ENCODE measurements at regions of chr19 and their contacts with region 1.

Region 1: DNA sequence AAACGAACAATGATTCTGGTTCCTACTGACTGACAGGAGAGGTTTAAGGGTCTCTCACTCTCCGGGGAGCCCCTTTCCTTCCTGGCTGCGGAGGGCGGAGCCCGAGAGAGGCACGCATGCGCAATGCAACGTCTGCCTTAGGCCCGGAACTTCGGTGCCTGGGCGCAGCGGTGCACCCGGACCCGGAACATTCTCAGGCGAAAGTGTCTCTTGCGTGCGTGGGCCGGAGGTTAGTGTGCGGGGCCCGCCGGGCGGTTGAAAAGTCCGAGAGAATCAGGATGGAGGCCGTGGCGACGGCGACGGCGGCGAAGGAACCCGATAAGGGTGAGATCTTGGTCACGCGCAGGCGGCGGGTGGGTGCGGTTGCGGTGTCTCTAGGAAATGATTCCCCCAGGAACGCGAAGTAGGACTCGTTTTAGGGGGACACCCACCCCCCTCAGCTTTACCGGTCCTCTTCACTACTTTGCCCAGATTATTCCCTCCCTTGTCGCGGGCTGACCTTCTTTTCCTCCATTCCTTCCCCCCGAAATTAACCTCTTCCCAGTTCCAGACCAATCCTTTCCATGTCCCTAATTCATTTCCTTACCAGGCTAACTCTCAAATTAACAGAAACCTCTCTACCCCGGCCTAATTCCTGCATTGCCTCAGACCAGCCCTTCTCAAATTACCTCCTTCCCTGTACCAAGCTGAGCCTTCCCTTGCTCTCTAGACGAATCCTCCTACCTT is at the start of gene CCDC97:
- DNase-seq: no peak
- H3K4me3 ChIP-seq: peak within 1 kb of the TSS; percentile 92
- CTCF ChIP-seq: no peak

Region 2: DNA sequence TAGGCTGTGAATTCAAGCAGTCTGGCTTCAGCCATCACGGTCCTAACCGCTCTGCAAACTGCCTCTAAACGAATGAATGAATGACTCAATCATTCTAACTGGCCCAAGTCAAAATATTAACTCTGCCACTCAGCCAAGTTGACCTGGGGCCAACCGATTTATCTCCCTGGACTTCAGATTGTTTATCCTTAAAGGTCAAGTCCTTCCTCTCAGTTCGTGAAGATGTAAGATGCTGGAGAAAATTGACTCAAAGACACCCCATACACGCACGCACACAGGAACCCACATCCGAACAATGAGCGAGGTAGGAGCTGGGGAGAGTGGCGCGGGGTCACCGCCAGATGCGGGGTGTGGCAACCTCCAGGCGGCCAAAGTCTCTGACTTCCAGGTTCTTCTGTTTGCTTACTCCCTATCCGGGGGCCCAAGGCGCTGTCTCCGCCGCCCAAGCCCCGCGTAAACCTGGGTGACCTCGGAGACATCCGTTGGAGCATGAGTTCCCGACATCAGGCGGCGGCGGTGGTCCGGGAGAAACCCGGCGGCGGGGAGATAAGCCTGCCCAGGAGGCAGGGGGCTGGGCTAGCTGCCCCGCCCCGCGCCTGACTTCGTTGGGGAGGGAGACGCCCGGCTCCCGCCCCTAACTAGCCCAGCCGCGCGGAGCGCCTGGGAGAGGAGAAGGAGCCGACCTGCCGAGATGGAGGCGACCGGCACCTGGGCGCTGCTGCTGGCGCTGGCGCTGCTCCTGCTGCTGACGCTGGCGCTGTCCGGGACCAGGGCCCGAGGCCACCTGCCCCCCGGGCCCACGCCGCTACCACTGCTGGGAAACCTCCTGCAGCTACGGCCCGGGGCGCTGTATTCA is 117.4 kb before region 1 on chr19 and contains the start of gene CYP2S1:
- CTCF ChIA-PET with region 1: interaction called, 10 read pairs
- POLR2A ChIA-PET with region 1: no interaction called
- DNase-seq: no peak
- H3K4me3 ChIP-seq: peak within 1 kb of the TSS; percentile 6; the same call in 1 of the 2 replicates
- CTCF ChIP-seq: no peak

Region 3: GRCh38 chr19:41226053-41226873 is 83.9 kb before region 1 on chr19:
- CTCF ChIA-PET with region 1: interaction called, 10 read pairs
- POLR2A ChIA-PET with region 1: no interaction called
- DNase-seq: no peak
- H3K4me3 ChIP-seq: peak overlapping the region; percentile 47
- CTCF ChIP-seq: no peak

Region 4: DNA sequence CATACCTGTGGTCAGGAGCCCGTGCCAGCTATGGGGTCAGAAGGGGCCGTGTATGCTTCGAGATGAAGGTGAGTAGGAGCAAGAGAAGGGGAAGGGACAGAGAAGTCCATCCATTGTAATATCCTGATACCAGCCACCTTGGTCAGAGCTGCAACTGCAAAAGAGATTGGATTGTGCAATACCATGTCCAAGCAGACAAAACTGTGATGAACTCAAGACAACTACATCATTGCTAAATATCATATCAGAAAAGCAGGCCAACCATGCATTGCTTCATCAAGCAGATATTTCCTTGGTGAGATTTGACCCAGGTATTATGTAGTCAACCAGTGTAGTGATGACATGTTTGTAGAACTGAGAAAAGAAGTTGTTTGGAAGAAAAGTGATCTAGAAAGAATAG is 34.0 kb before region 1 on chr19:
- CTCF ChIA-PET with region 1: interaction called, 20 read pairs
- POLR2A ChIA-PET with region 1: no interaction called
- DNase-seq: no peak
- H3K4me3 ChIP-seq: no peak overlapping the region
- CTCF ChIP-seq: no peak

Region 5: DNA sequence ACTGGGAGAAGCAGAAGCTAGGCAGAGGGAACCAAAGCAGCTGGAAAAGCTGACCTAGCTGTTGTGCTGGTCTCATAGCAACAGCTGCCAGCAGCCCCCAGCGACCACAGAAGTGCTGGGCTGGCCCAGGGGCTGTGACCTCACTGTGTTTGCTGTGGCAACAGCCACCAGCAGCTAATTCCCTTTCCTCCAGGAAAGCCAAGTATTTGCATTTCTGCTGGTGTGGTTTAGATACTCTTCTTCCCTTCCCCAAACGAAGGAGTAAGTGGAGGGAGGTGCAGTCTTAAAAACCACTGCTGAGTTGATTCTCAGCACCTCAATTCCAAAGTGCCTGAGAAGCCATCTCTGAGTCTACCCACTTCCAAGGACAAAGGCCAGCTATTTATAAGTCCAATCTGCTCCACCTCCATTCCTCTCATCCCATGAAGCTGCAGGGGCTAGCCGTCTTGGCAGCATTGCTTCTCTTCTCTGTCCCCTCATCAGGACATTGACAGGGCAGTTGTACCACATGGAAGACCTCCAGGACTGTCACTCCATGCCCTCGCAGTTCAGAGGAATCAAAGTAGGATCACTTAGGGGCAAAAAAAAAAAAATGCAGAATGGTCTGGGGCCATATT is 11.7 kb before region 1 on chr19:
- CTCF ChIA-PET with region 1: interaction called, 164 read pairs
- POLR2A ChIA-PET with region 1: interaction called, 4 read pairs
- DNase-seq: peak; percentile 37
- H3K4me3 ChIP-seq: no peak overlapping the region
- CTCF ChIP-seq: no peak

Region 6: DNA sequence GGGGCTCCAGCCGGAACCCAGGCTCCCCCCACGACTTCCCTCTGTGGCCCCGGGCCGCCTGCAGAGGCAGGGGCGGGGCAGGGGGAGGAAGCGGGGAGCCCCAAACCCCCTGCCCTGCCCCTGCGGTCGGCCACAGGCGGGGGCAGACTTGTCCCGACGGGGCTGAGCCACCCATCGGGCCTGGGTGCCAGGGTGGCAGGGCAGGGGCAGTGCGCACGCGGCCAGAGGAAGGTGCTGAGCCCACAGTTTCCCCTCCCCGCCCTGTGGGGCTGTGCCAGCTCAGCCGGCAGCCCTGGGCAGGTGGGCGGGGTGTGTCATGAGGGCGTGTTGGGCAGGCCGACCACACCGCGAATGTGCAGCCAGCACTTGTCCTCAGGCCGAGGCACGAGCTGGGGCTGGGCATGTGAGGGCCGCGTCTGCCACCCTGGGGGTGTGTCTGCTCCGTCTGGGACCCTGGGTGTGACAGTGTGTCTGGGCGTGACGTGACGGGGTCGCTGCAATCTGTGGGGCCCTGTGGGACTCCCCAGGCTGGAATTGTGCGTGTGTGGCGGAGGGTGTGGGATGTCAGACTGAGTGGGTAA is 17.5 kb after region 1 on chr19:
- CTCF ChIA-PET with region 1: interaction called, 53 read pairs
- POLR2A ChIA-PET with region 1: interaction called, 9 read pairs
- DNase-seq: no peak
- H3K4me3 ChIP-seq: no peak overlapping the region
- CTCF ChIP-seq: no peak

Region 7: DNA sequence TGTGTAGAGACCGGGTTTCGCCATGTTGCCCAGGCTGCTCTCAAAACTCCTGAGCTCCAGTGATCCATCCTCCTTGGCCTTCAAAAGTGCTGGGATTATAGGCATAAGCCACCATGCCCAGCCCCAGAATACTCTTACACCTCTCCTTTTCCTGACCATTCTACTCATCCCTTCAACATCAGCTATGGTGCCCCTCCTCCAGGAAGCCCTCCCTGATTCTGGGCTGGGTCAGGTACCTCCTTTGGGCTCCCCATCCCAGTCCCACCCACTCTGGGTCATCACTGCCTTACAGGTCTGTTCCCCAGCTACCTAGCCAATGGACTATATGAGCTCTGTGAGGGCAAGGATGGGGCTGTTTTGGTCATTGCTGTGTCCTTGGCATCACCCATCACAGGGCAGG is 34.0 kb after region 1 on chr19:
- CTCF ChIA-PET with region 1: no interaction called
- POLR2A ChIA-PET with region 1: no interaction called
- DNase-seq: no peak
- H3K4me3 ChIP-seq: no peak overlapping the region
- CTCF ChIP-seq: no peak

Measured in AG04449 (cell line).